ENCODE measurements at regions of chr18 and their contacts with region 1.

Region 1: GRCh38 chr18:74342416-74343043 is 26.9 kb downstream of the C18orf63 start:
- DNase-seq: peak; percentile 15
- H3K4me3 ChIP-seq: no peak overlapping the region
- H3K27me3 ChIP-seq: no peaks in the 10 kb centered on the region
- CTCF ChIP-seq: peak; percentile 62

Region 2: GRCh38 chr18:74081966-74082741 is 260.4 kb before region 1 on chr18:
- CTCF ChIA-PET with region 1: interaction called, 10 read pairs
- POLR2A ChIA-PET with region 1: no interaction called
- DNase-seq: peak; percentile 4
- H3K4me3 ChIP-seq: no peak overlapping the region
- H3K27me3 ChIP-seq: no peaks in the 10 kb centered on the region
- CTCF ChIP-seq: peak; percentile 79

Region 3: GRCh38 chr18:74190086-74190485 is 152.4 kb before region 1 on chr18:
- CTCF ChIA-PET with region 1: interaction called, 23 read pairs
- POLR2A ChIA-PET with region 1: no interaction called
- DNase-seq: no peak
- H3K4me3 ChIP-seq: no peak overlapping the region
- H3K27me3 ChIP-seq: no peaks in the 10 kb centered on the region; the same call in 1 of the 2 replicates
- CTCF ChIP-seq: no peak

Region 4: GRCh38 chr18:74196220-74197119 is 146.1 kb before region 1 on chr18:
- CTCF ChIA-PET with region 1: interaction called, 68 read pairs
- POLR2A ChIA-PET with region 1: no interaction called
- DNase-seq: no peak
- H3K4me3 ChIP-seq: peak overlapping the region; percentile 17; the same call in 1 of the 2 replicates
- H3K27me3 ChIP-seq: no peaks in the 10 kb centered on the region; the same call in none of the 2 replicates
- CTCF ChIP-seq: peak; percentile 71

Region 5: DNA sequence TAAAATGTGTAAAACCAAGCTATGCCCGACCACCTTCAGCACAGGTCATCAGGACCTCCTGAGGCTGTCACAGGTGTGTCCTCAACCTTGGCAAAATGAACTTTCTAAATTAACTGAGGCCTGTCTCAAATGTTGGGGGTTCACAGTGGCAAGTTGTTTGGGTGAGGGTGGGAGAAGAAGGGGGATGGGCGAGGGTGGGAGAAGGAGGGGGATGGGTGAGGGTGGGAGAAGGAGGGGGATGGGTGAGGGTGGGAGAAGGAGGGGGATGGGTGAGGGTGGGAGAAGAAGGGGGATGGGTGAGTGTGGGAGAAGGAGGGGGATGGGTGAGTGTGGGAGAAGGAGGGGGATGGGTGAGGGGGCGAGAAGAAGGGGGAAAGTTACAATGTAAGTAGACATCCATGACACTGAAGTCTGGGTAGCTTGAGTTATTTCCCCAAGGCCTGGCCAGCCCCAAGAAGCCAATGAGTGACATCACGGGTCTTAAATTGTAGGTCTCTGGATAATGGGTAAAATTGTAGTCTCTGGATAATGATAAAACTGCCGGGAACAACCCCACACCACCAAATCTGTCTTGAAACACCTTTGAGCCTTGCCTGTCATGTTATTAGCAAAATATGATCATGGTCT is 137.9 kb before region 1 on chr18:
- CTCF ChIA-PET with region 1: interaction called, 68 read pairs
- POLR2A ChIA-PET with region 1: no interaction called
- DNase-seq: no peak
- H3K4me3 ChIP-seq: no peak overlapping the region
- H3K27me3 ChIP-seq: no peaks in the 10 kb centered on the region; the same call in 1 of the 2 replicates
- CTCF ChIP-seq: no peak

Region 6: DNA sequence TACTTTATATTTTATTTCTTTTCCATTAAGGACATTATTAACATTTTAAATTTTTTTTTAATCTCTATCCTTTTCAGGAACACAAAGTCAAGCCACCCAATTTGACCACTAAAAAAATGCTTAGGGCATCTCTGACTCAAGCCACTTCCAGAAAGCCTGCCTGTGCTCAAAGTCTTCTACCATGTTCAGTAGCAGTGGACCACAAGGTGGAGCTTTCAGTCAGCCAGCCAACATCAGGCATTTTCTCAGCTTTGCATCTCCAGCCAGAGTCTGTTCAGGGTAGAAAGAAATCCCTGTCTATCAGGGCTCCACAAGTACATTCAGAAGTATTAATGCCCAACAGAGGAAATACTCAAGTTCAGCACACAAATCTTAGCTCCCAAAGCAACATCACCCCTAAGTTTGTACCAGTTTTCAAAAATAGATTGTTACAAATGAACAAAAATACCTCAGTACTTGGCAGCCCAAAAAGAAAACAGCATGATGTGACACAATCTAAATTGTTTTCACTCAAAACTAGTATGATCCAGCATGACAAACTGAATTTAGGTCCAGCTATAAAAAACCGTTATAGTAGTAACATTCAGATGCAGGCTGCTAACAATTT is 10.7 kb after region 1 on chr18:
- CTCF ChIA-PET with region 1: interaction called, 13 read pairs
- POLR2A ChIA-PET with region 1: no interaction called
- DNase-seq: no peak
- H3K4me3 ChIP-seq: no peak overlapping the region
- H3K27me3 ChIP-seq: peaks cover 2% of the 10 kb centered on the region; the same call in 1 of the 2 replicates
- CTCF ChIP-seq: peak; percentile 79

Measured in BJ (cell line).